PC-3 (cell line): ENCODE measurements at regions of chr2 and their contacts with region 1.

Region 1: DNA sequence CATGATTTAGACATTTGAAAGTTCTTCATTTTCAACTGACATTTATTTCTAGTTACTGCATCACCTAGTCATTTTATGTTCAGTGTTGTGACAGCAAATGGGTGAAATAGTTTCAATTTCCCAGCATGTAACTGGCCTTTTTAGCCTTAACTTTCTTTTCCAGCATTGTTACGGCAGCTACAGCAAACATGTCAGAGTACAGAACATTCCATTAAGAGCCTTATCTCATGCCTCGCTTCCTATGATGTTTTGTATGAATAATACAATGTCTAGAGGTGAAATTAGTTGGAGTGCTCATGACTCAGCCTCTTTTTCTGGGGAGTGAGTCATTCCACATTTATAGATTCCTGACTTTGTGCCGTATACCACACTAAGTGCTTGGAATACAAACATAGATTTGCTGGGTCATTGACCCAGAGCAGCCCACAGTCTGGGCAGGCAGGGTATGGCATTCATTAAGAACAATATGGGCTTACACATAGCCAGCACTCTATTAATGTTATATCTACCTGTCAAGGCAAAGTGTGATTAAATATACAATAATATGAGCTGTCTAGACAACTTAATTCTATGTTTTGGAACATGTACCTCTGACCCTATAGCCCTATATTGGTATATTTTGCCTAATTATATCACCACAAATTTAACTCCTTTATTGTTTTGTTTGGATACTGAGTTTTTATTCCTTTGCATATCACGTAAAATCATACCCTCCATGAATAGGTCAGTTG is 72.2 kb downstream of the MAP2 start:
- DNase-seq: peak; percentile 98
- ATAC-seq: peak; percentile 98
- H3K4me3 ChIP-seq: peak overlapping the region; percentile 17; the same call in 1 of the 2 replicates
- H3K27ac ChIP-seq: peak overlapping the region; percentile 66
- H3K4me1 ChIP-seq: peaks cover 26% of the 10 kb centered on the region
- H3K27me3 ChIP-seq: no peaks in the 10 kb centered on the region
- CTCF ChIP-seq: no peak

Region 2: GRCh38 chr2:209460151-209460761 is 35.8 kb before region 1 on chr2:
- CTCF ChIA-PET with region 1: no interaction called
- POLR2A ChIA-PET with region 1: interaction called, 3 read pairs
- intact Hi-C with region 1: loop called (anchors 1 kb)
- DNase-seq: peak; percentile 92
- ATAC-seq: peak; percentile 94
- H3K4me3 ChIP-seq: peak overlapping the region; percentile 28; the same call in 1 of the 2 replicates
- H3K27ac ChIP-seq: peak overlapping the region; percentile 93
- H3K4me1 ChIP-seq: peaks cover 39% of the 10 kb centered on the region
- H3K27me3 ChIP-seq: no peaks in the 10 kb centered on the region
- CTCF ChIP-seq: no peak

Region 3: DNA sequence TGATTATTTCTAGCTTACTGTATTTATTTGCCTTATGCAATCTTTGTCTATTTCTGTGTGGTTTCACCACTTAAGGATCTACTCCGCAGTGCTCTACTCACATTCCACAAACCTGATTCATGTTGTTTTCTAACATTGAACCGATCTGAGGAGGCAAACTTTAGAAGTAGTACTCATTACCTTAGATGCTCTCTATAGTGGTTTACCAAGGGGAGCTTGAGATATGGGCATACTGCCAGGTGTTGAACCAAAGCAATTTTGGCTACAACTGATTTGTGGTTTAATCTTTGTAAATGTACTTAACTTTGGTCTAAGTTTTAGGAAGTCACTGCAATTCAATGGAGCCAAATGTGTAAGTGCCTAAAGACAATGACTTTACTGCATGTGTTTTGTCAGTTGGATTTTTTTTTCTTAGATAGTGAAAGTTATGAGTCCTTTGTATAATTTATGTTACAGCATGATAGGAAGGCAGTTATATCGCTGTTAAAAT is 22.0 kb before region 1 on chr2:
- CTCF ChIA-PET with region 1: no interaction called
- POLR2A ChIA-PET with region 1: no interaction called
- intact Hi-C with region 1: loop called (anchors 1 kb)
- DNase-seq: peak; percentile 94
- ATAC-seq: peak; percentile 86
- H3K4me3 ChIP-seq: no peak overlapping the region
- H3K27ac ChIP-seq: 0 out of 2 replicates have a peak overlapping the region, but pooled peaks have one; percentile 9
- H3K4me1 ChIP-seq: peaks cover 38% of the 10 kb centered on the region
- H3K27me3 ChIP-seq: no peaks in the 10 kb centered on the region
- CTCF ChIP-seq: no peak

Region 4: DNA sequence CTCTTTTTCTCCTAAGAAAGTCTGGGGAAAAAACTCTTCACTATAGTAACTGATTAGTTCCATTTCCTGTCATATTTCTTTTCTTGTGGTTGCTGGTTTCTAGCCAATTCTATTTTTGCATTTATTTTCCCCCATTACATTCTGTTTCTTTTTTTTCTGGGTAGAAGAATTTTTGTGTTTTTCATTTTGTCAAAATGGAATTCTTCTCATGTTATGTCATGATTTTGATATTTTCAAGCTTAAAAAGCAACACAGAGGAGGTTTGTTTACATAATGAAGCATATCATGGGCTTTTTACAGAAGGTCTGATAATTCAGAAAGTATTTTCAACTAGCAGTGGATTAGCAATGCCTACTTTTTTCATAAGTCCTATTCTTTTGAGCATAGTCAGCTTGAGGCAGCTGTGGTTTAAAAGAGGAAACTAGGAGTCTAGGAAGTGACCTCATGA is 29.8 kb after region 1 on chr2:
- CTCF ChIA-PET with region 1: interaction called, 4 read pairs
- POLR2A ChIA-PET with region 1: no interaction called
- intact Hi-C with region 1: loop called (anchors 1 kb)
- DNase-seq: peak; percentile 55
- ATAC-seq: peak; percentile 69
- H3K4me3 ChIP-seq: no peak overlapping the region
- H3K27ac ChIP-seq: peak overlapping the region; percentile 16
- H3K4me1 ChIP-seq: peaks cover 31% of the 10 kb centered on the region
- H3K27me3 ChIP-seq: no peaks in the 10 kb centered on the region
- CTCF ChIP-seq: no peak

Region 5: DNA sequence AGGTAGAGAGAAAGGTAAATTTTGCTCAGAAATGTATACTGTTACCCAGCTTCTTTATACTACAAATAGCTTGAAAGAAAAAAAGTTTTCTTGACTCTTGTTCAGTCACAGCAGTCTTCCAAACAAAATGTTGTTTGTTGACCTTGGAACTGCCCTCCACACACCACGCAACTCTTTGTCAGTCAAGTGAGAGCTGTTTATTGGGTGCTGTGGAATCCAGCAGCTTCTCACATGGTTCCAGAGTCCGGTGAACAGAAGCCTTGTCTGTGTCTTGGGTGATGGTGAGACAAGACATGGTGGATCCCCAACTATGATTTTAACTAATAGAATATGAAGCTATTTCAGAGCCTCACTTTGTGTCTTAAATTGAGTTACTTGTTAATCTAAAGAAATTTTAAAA is 40.3 kb after region 1 on chr2:
- CTCF ChIA-PET with region 1: no interaction called
- POLR2A ChIA-PET with region 1: no interaction called
- intact Hi-C with region 1: loop called (anchors 1 kb)
- DNase-seq: no peak
- ATAC-seq: no peak
- H3K4me3 ChIP-seq: no peak overlapping the region
- H3K27ac ChIP-seq: no peak overlapping the region
- H3K4me1 ChIP-seq: no peaks in the 10 kb centered on the region
- H3K27me3 ChIP-seq: no peaks in the 10 kb centered on the region
- CTCF ChIP-seq: no peak

Region 6: DNA sequence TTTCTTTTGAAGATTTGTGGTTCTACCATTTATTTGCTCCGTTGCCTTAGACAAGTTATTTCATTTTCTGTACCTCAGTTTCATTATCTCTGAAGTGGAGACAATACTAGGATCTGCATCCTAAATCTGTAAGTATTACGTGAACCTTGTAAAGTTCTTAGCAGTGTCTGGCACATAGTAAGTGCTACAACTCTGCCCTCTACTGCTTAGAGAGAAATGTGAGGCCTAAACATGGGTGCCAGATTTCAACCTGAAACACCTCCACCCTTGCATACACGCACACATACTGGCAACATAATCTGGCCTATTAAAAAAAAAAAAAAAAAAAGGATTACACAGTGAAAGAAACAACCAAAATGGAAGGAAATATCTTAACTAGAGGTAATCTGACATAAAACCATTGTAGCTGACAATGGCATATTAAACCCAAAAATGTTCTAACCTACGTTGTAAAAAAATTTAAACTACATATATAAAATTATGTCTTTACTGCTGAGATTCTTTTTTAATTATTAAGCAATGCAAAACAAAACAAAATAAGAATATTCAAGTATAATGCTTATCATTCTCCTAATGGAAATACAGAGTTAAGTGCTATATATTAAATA is 60.4 kb after region 1 on chr2:
- CTCF ChIA-PET with region 1: no interaction called
- POLR2A ChIA-PET with region 1: no interaction called
- intact Hi-C with region 1: loop called (anchors 2 kb)
- DNase-seq: peak; percentile 73
- ATAC-seq: peak; percentile 94
- H3K4me3 ChIP-seq: no peak overlapping the region
- H3K27ac ChIP-seq: no peak overlapping the region
- H3K4me1 ChIP-seq: no peaks in the 10 kb centered on the region
- H3K27me3 ChIP-seq: no peaks in the 10 kb centered on the region
- CTCF ChIP-seq: peak; percentile 80

Region 7: GRCh38 chr2:209602259-209602658 is 106.2 kb after region 1 on chr2:
- CTCF ChIA-PET with region 1: no interaction called
- POLR2A ChIA-PET with region 1: no interaction called
- intact Hi-C with region 1: no loop called
- DNase-seq: no peak
- ATAC-seq: no peak
- H3K4me3 ChIP-seq: no peak overlapping the region
- H3K27ac ChIP-seq: no peak overlapping the region
- H3K4me1 ChIP-seq: no peaks in the 10 kb centered on the region
- H3K27me3 ChIP-seq: peaks cover 19% of the 10 kb centered on the region; the same call in 1 of the 2 replicates
- CTCF ChIP-seq: no peak

Region 8: DNA sequence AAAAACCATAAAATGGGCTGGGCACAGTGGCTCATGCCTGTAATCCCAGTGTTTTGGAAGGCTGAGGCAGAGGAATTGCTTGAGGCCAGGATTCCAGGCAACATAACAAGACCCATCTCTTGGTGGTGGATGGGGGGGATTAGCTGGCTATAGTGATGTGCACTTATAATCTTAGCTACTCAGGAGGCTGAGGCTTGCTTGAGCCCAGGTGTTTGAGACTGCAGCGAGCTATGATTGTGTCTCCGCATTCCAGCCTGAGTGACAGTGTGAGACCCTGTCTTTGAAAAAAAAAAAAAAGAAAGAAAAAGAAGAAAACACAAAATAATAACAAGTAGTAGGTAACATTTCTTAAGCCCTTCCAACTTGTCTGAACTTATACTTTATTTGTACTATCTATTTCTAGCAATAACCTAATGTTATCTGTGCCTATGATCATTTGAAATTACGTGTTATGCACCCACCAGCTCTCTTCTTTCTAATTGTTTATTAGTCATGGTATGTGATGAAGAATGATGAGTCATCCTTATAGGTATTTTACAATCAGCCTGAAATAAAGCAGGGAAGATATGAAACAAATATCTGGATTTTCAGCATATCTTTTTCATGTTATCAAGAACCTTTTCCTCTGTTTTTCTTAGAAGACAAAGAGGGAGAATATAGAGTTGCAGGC is 146.3 kb after region 1 on chr2:
- CTCF ChIA-PET with region 1: no interaction called
- POLR2A ChIA-PET with region 1: no interaction called
- intact Hi-C with region 1: no loop called
- DNase-seq: peak; percentile 61
- ATAC-seq: peak; percentile 16; the same call in 1 of the 2 replicates
- H3K4me3 ChIP-seq: no peak overlapping the region
- H3K27ac ChIP-seq: peak overlapping the region; percentile 12; the same call in 1 of the 2 replicates
- H3K4me1 ChIP-seq: peaks cover 44% of the 10 kb centered on the region
- H3K27me3 ChIP-seq: no peaks in the 10 kb centered on the region
- CTCF ChIP-seq: no peak